Activated naive CD4-positive, alpha-beta T cell treated with anti-CD3 and anti-CD28 coated beads for 36 hours (primary cell): ENCODE measurements at regions of chr1 and their contacts with region 1.

Region 1: GRCh38 chr1:66996018-66996682 is 57.8 kb downstream of the SLC35D1 start:
- DNase-seq: peak; percentile 89
- H3K4me3 Mint-ChIP-seq: no peak overlapping the region
- H3K27ac Mint-ChIP-seq: no peak overlapping the region
- H3K4me1 Mint-ChIP-seq: peaks cover 26% of the 10 kb centered on the region
- H3K27me3 Mint-ChIP-seq: no peaks in the 10 kb centered on the region

Region 2: GRCh38 chr1:66350001-66350547 is 646.1 kb before region 1 on chr1:
- CTCF ChIA-PET with region 1: no interaction called
- intact Hi-C with region 1: no loop called
- DNase-seq: peak; percentile 80
- H3K4me3 Mint-ChIP-seq: peak overlapping the region; percentile 33
- H3K27ac Mint-ChIP-seq: peak overlapping the region; percentile 90
- H3K4me1 Mint-ChIP-seq: peaks cover 92% of the 10 kb centered on the region
- H3K27me3 Mint-ChIP-seq: no peaks in the 10 kb centered on the region

Region 3: GRCh38 chr1:66840929-66841328 is 155.2 kb before region 1 on chr1:
- CTCF ChIA-PET with region 1: no interaction called
- intact Hi-C with region 1: no loop called
- DNase-seq: no peak
- H3K4me3 Mint-ChIP-seq: no peak overlapping the region
- H3K27ac Mint-ChIP-seq: peak overlapping the region; percentile 63
- H3K4me1 Mint-ChIP-seq: peaks cover 14% of the 10 kb centered on the region
- H3K27me3 Mint-ChIP-seq: no peaks in the 10 kb centered on the region

Region 4: GRCh38 chr1:67124455-67124854 is 128.3 kb after region 1 on chr1:
- CTCF ChIA-PET with region 1: interaction called, 10 read pairs
- intact Hi-C with region 1: no loop called
- DNase-seq: no peak
- H3K4me3 Mint-ChIP-seq: no peak overlapping the region
- H3K27ac Mint-ChIP-seq: no peak overlapping the region
- H3K4me1 Mint-ChIP-seq: peaks cover 4% of the 10 kb centered on the region
- H3K27me3 Mint-ChIP-seq: no peaks in the 10 kb centered on the region

Region 5: GRCh38 chr1:67418839-67419586 is 422.9 kb after region 1 on chr1:
- CTCF ChIA-PET with region 1: no interaction called
- intact Hi-C with region 1: loop called (anchors 5 kb)
- DNase-seq: no peak
- H3K4me3 Mint-ChIP-seq: no peak overlapping the region
- H3K27ac Mint-ChIP-seq: peak overlapping the region; percentile 72
- H3K4me1 Mint-ChIP-seq: peaks cover 85% of the 10 kb centered on the region
- H3K27me3 Mint-ChIP-seq: no peaks in the 10 kb centered on the region

Region 6: DNA sequence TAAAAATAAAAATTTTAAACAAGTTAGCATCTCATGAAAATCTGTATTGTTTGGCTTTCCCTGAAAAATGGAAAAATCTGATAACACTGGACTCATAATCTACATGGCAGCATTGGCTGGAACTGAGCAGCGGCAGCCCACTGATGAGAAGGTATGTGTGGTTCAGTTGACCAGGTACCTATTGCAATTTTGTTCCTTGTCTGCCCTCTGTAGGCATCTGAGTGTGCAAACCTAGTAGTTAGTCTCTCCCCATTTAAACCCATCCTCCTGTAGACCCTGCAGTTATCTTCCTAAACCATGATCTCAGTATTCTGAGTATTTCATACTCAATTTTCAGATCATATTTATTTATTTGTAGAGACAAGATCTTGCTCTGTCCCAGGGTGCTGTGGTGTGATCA is 493.5 kb after region 1 on chr1:
- CTCF ChIA-PET with region 1: no interaction called
- intact Hi-C with region 1: loop called (anchors 2 kb)
- DNase-seq: peak; percentile 40
- H3K4me3 Mint-ChIP-seq: no peak overlapping the region
- H3K27ac Mint-ChIP-seq: no peak overlapping the region
- H3K4me1 Mint-ChIP-seq: peaks cover under 1% of the 10 kb centered on the region
- H3K27me3 Mint-ChIP-seq: no peaks in the 10 kb centered on the region

Region 7: GRCh38 chr1:68162761-68163160 is 1166.6 kb after region 1 on chr1:
- CTCF ChIA-PET with region 1: no interaction called
- intact Hi-C with region 1: no loop called
- DNase-seq: no peak
- H3K4me3 Mint-ChIP-seq: no peak overlapping the region
- H3K27ac Mint-ChIP-seq: no peak overlapping the region
- H3K4me1 Mint-ChIP-seq: no peaks in the 10 kb centered on the region
- H3K27me3 Mint-ChIP-seq: peaks cover 1% of the 10 kb centered on the region